CD4-positive, alpha-beta memory T cell (primary cell): ENCODE measurements at regions of chr14 and their contacts with region 1.

Region 1: GRCh38 chr14:34098045-34098984 is 147.4 kb upstream of the EGLN3 start:
- DNase-seq: peak in 4 of 5 donors; percentile 13 to 26 (median 22)
- H3K4me3 ChIP-seq: no peak overlapping the region
- H3K4me3 Mint-ChIP-seq: no peak overlapping the region
- H3K27ac ChIP-seq: no peak overlapping the region
- H3K27ac Mint-ChIP-seq: no peak overlapping the region
- H3K4me1 ChIP-seq: peaks cover 6% of the 10 kb centered on the region
- H3K4me1 Mint-ChIP-seq: peaks cover 8 to 19% (median 13%) of the 10 kb centered on the region in 4 donors
- H3K27me3 ChIP-seq: no peaks in the 10 kb centered on the region
- H3K27me3 Mint-ChIP-seq: no peaks in the 10 kb centered on the region

Region 2: DNA sequence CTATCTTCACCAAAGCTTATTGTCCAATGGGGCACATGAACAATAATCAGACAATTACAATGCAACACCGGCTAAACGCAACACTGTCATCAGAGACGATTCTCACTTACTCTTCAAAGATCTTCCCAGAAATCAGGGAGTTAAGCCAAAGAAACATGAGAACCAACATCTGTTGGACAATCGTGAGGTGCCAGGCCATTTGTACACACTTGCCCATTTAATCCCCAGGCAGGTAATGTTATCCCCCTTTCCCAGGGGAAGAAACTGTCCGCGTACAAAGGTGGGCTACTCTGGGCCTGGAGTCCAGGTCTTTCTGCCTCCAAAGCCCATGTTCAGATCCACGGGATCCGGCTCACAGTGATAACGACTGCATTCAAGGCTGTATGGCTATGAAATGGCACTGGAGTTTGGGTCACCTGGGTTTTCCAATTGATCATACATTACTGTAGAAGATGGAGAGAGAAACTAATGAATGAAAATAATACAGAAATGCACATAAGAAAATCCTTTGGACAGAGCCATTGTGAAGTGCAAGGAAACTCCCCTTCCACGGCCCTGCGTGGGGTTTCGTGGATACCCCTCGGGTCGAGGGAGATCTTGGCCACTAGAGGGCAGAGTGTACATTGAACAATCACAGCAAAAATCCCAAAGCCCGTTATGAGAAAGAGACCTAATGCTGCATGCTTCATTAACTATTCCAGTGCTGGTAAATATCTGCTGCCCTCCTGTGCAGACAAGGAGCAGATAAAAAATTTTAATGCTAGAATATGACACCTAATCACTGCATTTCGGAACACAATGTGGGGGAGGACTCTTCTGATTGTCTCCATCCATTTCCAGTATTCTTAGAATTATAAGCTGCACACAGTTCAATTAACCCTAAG is 258.9 kb before region 1 on chr14:
- CTCF ChIA-PET with region 1: interaction called, 75 read pairs
- POLR2A ChIA-PET with region 1: interaction called, 4 read pairs
- intact Hi-C with region 1: loop called (anchors 1 kb)
- DNase-seq: peak in 4 of 5 donors; percentile 50 to 63 (median 58)
- H3K4me3 ChIP-seq: no peak overlapping the region
- H3K4me3 Mint-ChIP-seq: no peak overlapping the region
- H3K27ac ChIP-seq: no peak overlapping the region
- H3K27ac Mint-ChIP-seq: no peak overlapping the region
- H3K4me1 ChIP-seq: peaks cover 7% of the 10 kb centered on the region
- H3K4me1 Mint-ChIP-seq: peaks cover 0 to 8% (median 3%) of the 10 kb centered on the region in 4 donors
- H3K27me3 ChIP-seq: no peaks in the 10 kb centered on the region
- H3K27me3 Mint-ChIP-seq: no peaks in the 10 kb centered on the region

Region 3: GRCh38 chr14:33848706-33849454 is 249.4 kb before region 1 on chr14:
- CTCF ChIA-PET with region 1: interaction called, 75 read pairs
- POLR2A ChIA-PET with region 1: no interaction called
- intact Hi-C with region 1: no loop called
- DNase-seq: no peak
- H3K4me3 ChIP-seq: no peak overlapping the region
- H3K4me3 Mint-ChIP-seq: no peak overlapping the region
- H3K27ac ChIP-seq: no peak overlapping the region
- H3K27ac Mint-ChIP-seq: no peak overlapping the region
- H3K4me1 ChIP-seq: no peaks in the 10 kb centered on the region
- H3K4me1 Mint-ChIP-seq: peaks cover 0 to 2% (median 0%) of the 10 kb centered on the region in 4 donors
- H3K27me3 ChIP-seq: no peaks in the 10 kb centered on the region
- H3K27me3 Mint-ChIP-seq: peaks cover 3% of the 10 kb centered on the region in 2 donors

Region 4: GRCh38 chr14:34035177-34035933 is 63.0 kb before region 1 on chr14:
- CTCF ChIA-PET with region 1: no interaction called
- POLR2A ChIA-PET with region 1: no interaction called
- intact Hi-C with region 1: no loop called
- DNase-seq: no peak
- H3K4me3 ChIP-seq: no peak overlapping the region
- H3K4me3 Mint-ChIP-seq: no peak overlapping the region
- H3K27ac ChIP-seq: no peak overlapping the region
- H3K27ac Mint-ChIP-seq: no peak overlapping the region
- H3K4me1 ChIP-seq: no peaks in the 10 kb centered on the region
- H3K4me1 Mint-ChIP-seq: peaks cover 7 to 23% (median 14%) of the 10 kb centered on the region in 4 donors
- H3K27me3 ChIP-seq: no peaks in the 10 kb centered on the region
- H3K27me3 Mint-ChIP-seq: no peaks in the 10 kb centered on the region

Region 5: GRCh38 chr14:34128665-34129064 is 30.4 kb after region 1 on chr14:
- CTCF ChIA-PET with region 1: no interaction called
- POLR2A ChIA-PET with region 1: no interaction called
- intact Hi-C with region 1: no loop called
- DNase-seq: no peak
- H3K4me3 ChIP-seq: no peak overlapping the region
- H3K4me3 Mint-ChIP-seq: no peak overlapping the region
- H3K27ac ChIP-seq: no peak overlapping the region
- H3K27ac Mint-ChIP-seq: no peak overlapping the region
- H3K4me1 ChIP-seq: no peaks in the 10 kb centered on the region
- H3K4me1 Mint-ChIP-seq: no peaks in the 10 kb centered on the region
- H3K27me3 ChIP-seq: no peaks in the 10 kb centered on the region
- H3K27me3 Mint-ChIP-seq: no peaks in the 10 kb centered on the region